Activated CD4-positive, alpha-beta T cell treated with anti-CD3 and anti-CD28 coated beads for 36 hours (primary cell): ENCODE measurements at regions of chr7 and their contacts with region 1.

Region 1: GRCh38 chr7:93036807-93037206 is 81.0 kb downstream of the SAMD9 start:
- DNase-seq: peak; percentile 67
- ATAC-seq: peak; percentile 97
- H3K4me3 Mint-ChIP-seq: no peak overlapping the region
- H3K27ac Mint-ChIP-seq: peak overlapping the region; percentile 74
- H3K4me1 Mint-ChIP-seq: peaks cover 20% of the 10 kb centered on the region
- H3K27me3 Mint-ChIP-seq: no peaks in the 10 kb centered on the region

Region 2: GRCh38 chr7:92621026-92621540 is 415.7 kb before region 1 on chr7:
- CTCF ChIA-PET with region 1: no interaction called
- POLR2A ChIA-PET with region 1: no interaction called
- intact Hi-C with region 1: loop called in 1 of 2 experiments (anchors 5 kb)
- DNase-seq: peak; percentile 90
- ATAC-seq: peak; percentile 78
- H3K4me3 Mint-ChIP-seq: peak overlapping the region; percentile 0
- H3K27ac Mint-ChIP-seq: peak overlapping the region; percentile 90
- H3K4me1 Mint-ChIP-seq: peaks cover 50% of the 10 kb centered on the region
- H3K27me3 Mint-ChIP-seq: no peaks in the 10 kb centered on the region

Region 3: GRCh38 chr7:92708111-92709042 is 328.4 kb before region 1 on chr7:
- CTCF ChIA-PET with region 1: no interaction called
- POLR2A ChIA-PET with region 1: no interaction called
- intact Hi-C with region 1: loop called in 1 of 2 experiments (anchors 2 kb)
- DNase-seq: no peak
- ATAC-seq: peak; percentile 84
- H3K4me3 Mint-ChIP-seq: no peak overlapping the region
- H3K27ac Mint-ChIP-seq: peak overlapping the region; percentile 86
- H3K4me1 Mint-ChIP-seq: peaks cover 52% of the 10 kb centered on the region
- H3K27me3 Mint-ChIP-seq: no peaks in the 10 kb centered on the region

Region 4: GRCh38 chr7:92854501-92855238 is 182.1 kb before region 1 on chr7:
- CTCF ChIA-PET with region 1: interaction called, 4 read pairs
- POLR2A ChIA-PET with region 1: no interaction called
- intact Hi-C with region 1: loop called in 1 of 2 experiments (anchors 5 kb)
- DNase-seq: peak; percentile 47
- ATAC-seq: peak; percentile 91
- H3K4me3 Mint-ChIP-seq: no peak overlapping the region
- H3K27ac Mint-ChIP-seq: peak overlapping the region; percentile 69
- H3K4me1 Mint-ChIP-seq: peaks cover 16% of the 10 kb centered on the region
- H3K27me3 Mint-ChIP-seq: peaks cover 6% of the 10 kb centered on the region

Region 5: GRCh38 chr7:92973974-92974373 is 62.8 kb before region 1 on chr7:
- CTCF ChIA-PET with region 1: no interaction called
- POLR2A ChIA-PET with region 1: no interaction called
- intact Hi-C with region 1: loop called in 1 of 2 experiments (anchors 5 kb)
- DNase-seq: no peak
- ATAC-seq: no peak
- H3K4me3 Mint-ChIP-seq: no peak overlapping the region
- H3K27ac Mint-ChIP-seq: no peak overlapping the region
- H3K4me1 Mint-ChIP-seq: peaks cover 11% of the 10 kb centered on the region
- H3K27me3 Mint-ChIP-seq: peaks cover 12% of the 10 kb centered on the region

Region 6: GRCh38 chr7:93055543-93056107 is 18.8 kb after region 1 on chr7:
- CTCF ChIA-PET with region 1: interaction called, 5 read pairs
- POLR2A ChIA-PET with region 1: no interaction called
- intact Hi-C with region 1: loop called in 1 of 2 experiments (anchors 2 kb)
- DNase-seq: no peak
- ATAC-seq: peak; percentile 74
- H3K4me3 Mint-ChIP-seq: no peak overlapping the region
- H3K27ac Mint-ChIP-seq: no peak overlapping the region
- H3K4me1 Mint-ChIP-seq: peaks cover 9% of the 10 kb centered on the region
- H3K27me3 Mint-ChIP-seq: peaks cover 13% of the 10 kb centered on the region

Region 7: GRCh38 chr7:93374345-93374940 is 337.6 kb after region 1 on chr7:
- CTCF ChIA-PET with region 1: no interaction called
- POLR2A ChIA-PET with region 1: no interaction called
- intact Hi-C with region 1: no loop called
- DNase-seq: no peak
- ATAC-seq: no peak
- H3K4me3 Mint-ChIP-seq: no peak overlapping the region
- H3K27ac Mint-ChIP-seq: no peak overlapping the region
- H3K4me1 Mint-ChIP-seq: no peaks in the 10 kb centered on the region
- H3K27me3 Mint-ChIP-seq: peaks cover 12% of the 10 kb centered on the region